AG04450 (cell line): ENCODE measurements at regions of chr2 and their contacts with region 1.

Region 1: DNA sequence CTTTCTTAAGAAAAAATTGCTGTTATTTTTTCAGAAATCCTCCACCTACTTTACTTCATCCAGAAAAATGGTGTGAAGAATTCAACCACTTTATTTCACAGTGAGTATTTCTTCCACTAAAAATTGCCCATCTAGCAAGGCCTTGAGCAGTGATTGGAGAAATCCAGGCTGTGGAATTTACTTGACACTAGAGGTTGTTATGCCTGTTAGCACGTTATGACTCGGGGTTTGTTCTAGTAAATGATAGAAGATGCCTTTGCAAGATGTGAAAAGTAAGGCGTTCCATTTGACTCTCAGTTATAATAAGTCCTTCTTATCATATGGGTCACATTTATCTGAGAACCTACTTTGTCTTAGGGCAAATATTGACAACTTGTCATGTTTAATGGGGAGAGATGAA is 157.4 kb downstream of the MYO3B start:
- DNase-seq: no peak
- H3K4me3 ChIP-seq: no peak overlapping the region
- H3K27ac ChIP-seq: no peak overlapping the region
- H3K27me3 ChIP-seq: no peaks in the 10 kb centered on the region
- CTCF ChIP-seq: no peak

Region 2: DNA sequence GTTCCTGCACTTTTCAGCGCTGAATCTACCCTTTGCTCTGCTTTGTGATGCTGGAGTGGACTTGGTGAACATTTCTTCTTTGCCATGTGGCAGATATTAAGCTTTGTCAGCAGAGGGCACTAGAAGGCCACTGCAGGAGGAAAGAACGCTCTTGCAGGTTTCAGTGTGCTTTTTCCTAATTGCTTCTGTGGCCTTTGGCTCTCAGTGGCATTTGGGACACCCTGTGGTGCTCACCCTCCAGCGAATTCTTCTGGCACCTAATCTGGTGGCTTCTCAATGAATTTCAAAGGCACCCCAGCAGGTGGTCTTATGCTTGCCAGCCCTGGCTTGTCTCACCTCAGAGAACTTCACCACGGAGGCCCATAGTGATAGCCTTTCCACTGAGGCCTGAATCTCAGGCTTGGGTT is 10.7 kb before region 1 on chr2:
- CTCF ChIA-PET with region 1: interaction called, 11 read pairs
- POLR2A ChIA-PET with region 1: no interaction called
- DNase-seq: peak; percentile 0
- H3K4me3 ChIP-seq: no peak overlapping the region
- H3K27ac ChIP-seq: no peak overlapping the region
- H3K27me3 ChIP-seq: no peaks in the 10 kb centered on the region
- CTCF ChIP-seq: peak; percentile 71